Posterior cingulate gyrus (tissue), 11 donors: ENCODE measurements at regions of chr1 and their contacts with region 1.

Region 1: GRCh38 chr1:5637171-5637570 is 355.1 kb downstream of the NPHP4 start:
- DNase-seq: peak in 5 of 10 donors; percentile 36 to 84 (median 48)

Region 2: GRCh38 chr1:5536776-5537175 is 100.4 kb before region 1 on chr1:
- intact Hi-C with region 1: no loop called
- DNase-seq: no peak

Region 3: DNA sequence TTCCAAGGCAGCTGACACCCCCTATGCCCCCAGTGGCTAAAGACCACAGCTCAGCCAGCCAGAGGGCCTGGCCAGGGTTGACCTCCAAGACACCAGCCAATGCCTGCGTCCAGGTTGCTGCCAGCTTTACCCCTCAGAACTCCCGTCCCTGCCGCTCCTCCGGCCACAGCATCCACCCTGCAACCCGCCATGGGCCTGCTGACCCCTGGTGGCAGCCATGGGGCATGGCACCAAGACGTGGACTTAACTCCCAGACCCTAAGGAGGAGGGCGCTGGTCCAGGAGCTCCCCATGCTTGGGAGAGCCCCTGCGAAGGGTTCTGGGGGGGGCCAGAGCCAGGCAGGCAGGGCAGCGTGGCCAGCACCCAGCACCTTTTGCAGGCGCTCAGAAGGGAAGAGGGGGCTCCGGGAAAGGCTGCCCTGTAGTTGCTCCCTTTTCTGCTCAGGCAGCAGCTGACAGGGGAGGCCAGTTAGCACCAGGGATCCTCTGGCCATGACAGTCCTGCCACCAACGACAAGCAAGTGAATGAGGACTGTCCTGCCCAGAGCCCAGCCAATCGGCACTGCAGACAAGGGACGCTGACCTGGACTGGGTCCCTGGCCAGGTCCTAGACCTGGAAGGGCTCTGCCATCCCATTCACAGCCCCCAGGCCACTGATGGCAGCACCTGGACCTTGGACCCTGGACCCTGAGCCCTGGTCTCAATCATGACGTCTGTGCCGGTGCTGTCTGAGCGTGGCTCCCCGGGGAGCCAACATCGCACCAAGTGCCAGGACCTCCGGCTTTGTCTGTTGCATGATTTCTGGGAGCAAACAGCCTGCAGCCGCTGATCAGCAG is 108.8 kb after region 1 on chr1:
- intact Hi-C with region 1: loop called (anchors 5 kb)
- DNase-seq: peak in 9 of 10 donors; percentile 63 to 96 (median 73)

Region 4: DNA sequence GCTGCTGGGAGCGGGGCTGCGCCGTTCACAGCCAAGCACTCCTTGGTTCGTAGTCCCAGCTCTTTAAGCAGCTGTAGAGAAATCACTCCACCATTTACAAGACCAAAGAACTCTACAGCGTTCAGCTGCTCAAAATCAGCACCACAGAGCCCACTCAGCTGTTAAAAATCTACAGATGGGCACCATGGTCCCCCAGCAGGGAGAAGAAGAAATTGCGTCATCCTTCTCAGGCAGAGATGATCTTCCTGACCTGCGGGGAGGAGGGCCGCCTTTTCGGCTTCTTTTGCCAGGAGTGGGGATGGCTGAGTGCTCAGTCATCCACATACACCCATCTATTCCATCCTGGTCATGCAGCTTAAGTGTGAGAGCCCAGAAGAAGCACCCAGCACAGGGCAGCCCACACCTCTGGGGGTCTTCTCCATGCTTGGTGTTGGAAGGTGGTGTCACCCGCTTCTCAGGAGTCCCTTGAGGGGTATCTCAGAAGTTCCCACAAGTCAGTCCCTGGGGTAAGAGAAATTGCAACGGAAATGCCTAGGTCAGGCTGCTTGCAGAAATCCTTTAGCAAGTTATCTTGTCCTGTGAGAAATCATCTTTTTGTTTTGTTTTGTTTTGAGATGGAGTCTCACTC is 191.3 kb after region 1 on chr1:
- intact Hi-C with region 1: no loop called
- DNase-seq: peak in 2 of 10 donors; percentile 22 to 43

Region 5: DNA sequence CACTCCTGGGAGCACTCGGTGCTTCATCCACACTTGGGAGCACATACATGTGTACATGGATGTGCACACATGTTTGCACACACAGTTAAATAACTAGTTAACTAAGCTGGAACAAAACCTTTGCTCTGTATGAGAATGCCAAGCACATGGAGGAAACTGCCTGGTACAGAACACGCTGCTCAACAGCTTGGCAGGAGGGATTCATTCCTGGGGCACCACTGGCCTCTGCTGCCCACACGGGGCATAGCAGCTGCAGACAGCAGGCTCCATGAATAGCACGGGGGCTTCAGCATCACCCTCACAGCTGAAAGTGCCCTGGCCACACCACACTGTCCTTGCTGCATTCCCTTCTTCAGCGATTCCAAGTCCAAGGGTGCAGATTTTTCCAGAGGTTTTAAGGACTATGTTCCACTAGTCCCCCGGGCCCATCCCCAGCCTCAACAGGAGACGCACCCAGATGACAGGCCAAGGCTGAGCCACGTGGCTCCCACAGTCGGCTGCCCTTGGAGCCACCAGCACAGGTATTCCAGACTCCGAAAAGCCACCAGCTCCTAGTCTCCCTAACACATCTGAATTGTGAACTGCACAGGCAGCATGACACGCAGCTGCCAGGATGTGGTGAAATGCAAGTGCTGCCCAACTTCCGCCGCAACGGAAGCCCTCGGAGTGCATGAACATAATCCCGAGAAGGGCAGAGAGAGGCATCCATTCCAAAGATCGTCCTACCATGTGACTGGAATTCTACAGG is 338.1 kb after region 1 on chr1:
- intact Hi-C with region 1: loop called (anchors 10 kb)
- DNase-seq: peak in 9 of 10 donors; percentile 59 to 96 (median 73)

Region 6: GRCh38 chr1:6059866-6060265 is 422.7 kb after region 1 on chr1:
- intact Hi-C with region 1: no loop called
- DNase-seq: no peak